ENCODE measurements at regions of chr3 and their contacts with region 1.

Region 1: DNA sequence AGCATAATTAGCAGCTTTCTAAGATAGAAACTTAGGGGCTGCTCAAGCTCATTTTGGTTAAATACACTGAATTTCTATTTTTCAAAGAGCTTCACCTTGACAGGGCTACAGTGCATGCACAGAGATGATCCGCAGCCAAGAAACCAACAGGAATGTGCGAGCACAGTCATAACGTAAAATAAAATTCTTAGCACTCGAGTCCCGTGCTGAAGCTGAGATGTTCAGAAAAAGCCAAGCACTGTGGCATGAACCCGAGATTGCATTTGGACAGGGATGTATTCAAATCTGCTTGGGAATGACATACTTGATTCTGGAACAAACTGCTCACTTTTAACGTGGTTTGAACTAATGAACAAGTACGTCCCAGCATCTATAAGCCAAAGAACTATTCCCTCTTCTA is 340.3 kb downstream of the FOXP1 start:
- DNase-seq: no peak
- H3K4me3 Mint-ChIP-seq: no peak overlapping the region
- H3K27ac Mint-ChIP-seq: no peak overlapping the region
- H3K4me1 Mint-ChIP-seq: peaks cover 71% of the 10 kb centered on the region
- H3K27me3 Mint-ChIP-seq: no peaks in the 10 kb centered on the region

Region 2: GRCh38 chr3:70531063-70531657 is 712.1 kb before region 1 on chr3:
- CTCF ChIA-PET with region 1: no interaction called
- intact Hi-C with region 1: loop called (anchors 5 kb)
- DNase-seq: no peak
- H3K4me3 Mint-ChIP-seq: no peak overlapping the region
- H3K27ac Mint-ChIP-seq: no peak overlapping the region
- H3K4me1 Mint-ChIP-seq: no peaks in the 10 kb centered on the region
- H3K27me3 Mint-ChIP-seq: peaks cover 1% of the 10 kb centered on the region

Region 3: GRCh38 chr3:70989174-70989573 is 254.1 kb before region 1 on chr3:
- CTCF ChIA-PET with region 1: no interaction called
- intact Hi-C with region 1: no loop called
- DNase-seq: no peak
- H3K4me3 Mint-ChIP-seq: no peak overlapping the region
- H3K27ac Mint-ChIP-seq: peak overlapping the region; percentile 38
- H3K4me1 Mint-ChIP-seq: peaks cover 72% of the 10 kb centered on the region
- H3K27me3 Mint-ChIP-seq: no peaks in the 10 kb centered on the region